Breast epithelium (tissue), 4 donors: ENCODE measurements at regions of chr3 and their contacts with region 1.

Region 1: GRCh38 chr3:37779289-37780152 is 82.2 kb upstream of the CTDSPL start:
- DNase-seq: no peak
- H3K4me3 ChIP-seq: no peak overlapping the region
- H3K27ac ChIP-seq: no peak overlapping the region
- H3K4me1 ChIP-seq: no peaks in the 10 kb centered on the region
- H3K27me3 ChIP-seq: no peaks in the 10 kb centered on the region
- CTCF ChIP-seq: peak; percentile 68 to 83 (median 69)
- POLR2A ChIP-seq: no peak

Region 2: DNA sequence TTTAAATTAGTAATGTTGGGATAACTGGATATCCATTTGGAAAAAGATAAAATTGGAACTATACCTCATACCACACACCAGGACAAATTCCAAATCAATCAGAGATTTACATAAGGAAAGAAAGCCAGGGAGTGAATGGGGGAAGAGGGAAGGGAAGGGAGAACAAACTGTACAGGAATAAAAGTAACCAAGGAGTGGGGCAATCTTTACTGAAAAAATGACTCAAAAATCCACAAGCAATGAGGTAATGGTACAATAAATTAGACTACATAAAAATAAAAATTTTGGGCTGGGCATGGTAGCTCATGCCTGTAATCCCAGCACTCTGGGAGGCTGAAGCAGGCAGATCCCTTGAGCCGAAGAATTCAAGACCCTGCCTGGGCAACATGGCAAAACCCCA is 703.6 kb before region 1 on chr3:
- intact Hi-C with region 1: no loop called
- DNase-seq: no peak
- H3K4me3 ChIP-seq: no peak overlapping the region
- H3K27ac ChIP-seq: no peak overlapping the region
- H3K4me1 ChIP-seq: no peaks in the 10 kb centered on the region
- H3K27me3 ChIP-seq: no peaks in the 10 kb centered on the region
- CTCF ChIP-seq: no peak
- POLR2A ChIP-seq: no peak

Region 3: GRCh38 chr3:38473229-38473628 is 693.7 kb after region 1 on chr3:
- intact Hi-C with region 1: no loop called
- DNase-seq: no peak
- H3K4me3 ChIP-seq: no peak overlapping the region
- H3K27ac ChIP-seq: no peak overlapping the region
- H3K4me1 ChIP-seq: peaks cover 0 to 7% of the 10 kb centered on the region in 2 donors
- H3K27me3 ChIP-seq: no peaks in the 10 kb centered on the region
- CTCF ChIP-seq: no peak
- POLR2A ChIP-seq: no peak

Region 4: GRCh38 chr3:39051647-39052561 is 1272.4 kb after region 1 on chr3 and contains the starts of genes SCN11A and WDR48:
- intact Hi-C with region 1: loop called (anchors 10 kb)
- DNase-seq: peak; percentile 93 to 94
- H3K4me3 ChIP-seq: peak within 1 kb of the TSS; percentile 81 to 100 (median 99)
- H3K27ac ChIP-seq: peak within 1 kb of the TSS; percentile 97 to 98
- H3K4me1 ChIP-seq: peaks cover 0 to 7% of the 10 kb centered on the region in 2 donors
- H3K27me3 ChIP-seq: no peaks in the 10 kb centered on the region
- CTCF ChIP-seq: no peak
- POLR2A ChIP-seq: peak; percentile 89
- total RNA-seq, gene SCN11A: 0.15 to 0.48 (median 0.33) TPM
- total RNA-seq, gene WDR48: 32.8 to 48.9 (median 33.8) TPM